Psoas muscle (tissue), 8 donors: ENCODE measurements at regions of chr12 and their contacts with region 1.

Region 1: GRCh38 chr12:27733052-27733656 is 22.5 kb downstream of the MRPS35 start:
- DNase-seq: no peak
- ATAC-seq: peak in 3 of 4 donors; percentile 61 to 67 (median 65)
- H3K4me3 ChIP-seq: no peak overlapping the region
- H3K27ac ChIP-seq: no peak overlapping the region
- H3K4me1 ChIP-seq: no peaks in the 10 kb centered on the region
- H3K27me3 ChIP-seq: no peaks in the 10 kb centered on the region
- CTCF ChIP-seq: peak; percentile 60

Region 2: GRCh38 chr12:27221625-27222387 is 511.3 kb before region 1 on chr12:
- intact Hi-C with region 1: no loop called
- DNase-seq: no peak
- ATAC-seq: no peak
- H3K4me3 ChIP-seq: no peak overlapping the region
- H3K27ac ChIP-seq: no peak overlapping the region
- H3K4me1 ChIP-seq: no peaks in the 10 kb centered on the region
- H3K27me3 ChIP-seq: no peaks in the 10 kb centered on the region
- CTCF ChIP-seq: no peak

Region 3: DNA sequence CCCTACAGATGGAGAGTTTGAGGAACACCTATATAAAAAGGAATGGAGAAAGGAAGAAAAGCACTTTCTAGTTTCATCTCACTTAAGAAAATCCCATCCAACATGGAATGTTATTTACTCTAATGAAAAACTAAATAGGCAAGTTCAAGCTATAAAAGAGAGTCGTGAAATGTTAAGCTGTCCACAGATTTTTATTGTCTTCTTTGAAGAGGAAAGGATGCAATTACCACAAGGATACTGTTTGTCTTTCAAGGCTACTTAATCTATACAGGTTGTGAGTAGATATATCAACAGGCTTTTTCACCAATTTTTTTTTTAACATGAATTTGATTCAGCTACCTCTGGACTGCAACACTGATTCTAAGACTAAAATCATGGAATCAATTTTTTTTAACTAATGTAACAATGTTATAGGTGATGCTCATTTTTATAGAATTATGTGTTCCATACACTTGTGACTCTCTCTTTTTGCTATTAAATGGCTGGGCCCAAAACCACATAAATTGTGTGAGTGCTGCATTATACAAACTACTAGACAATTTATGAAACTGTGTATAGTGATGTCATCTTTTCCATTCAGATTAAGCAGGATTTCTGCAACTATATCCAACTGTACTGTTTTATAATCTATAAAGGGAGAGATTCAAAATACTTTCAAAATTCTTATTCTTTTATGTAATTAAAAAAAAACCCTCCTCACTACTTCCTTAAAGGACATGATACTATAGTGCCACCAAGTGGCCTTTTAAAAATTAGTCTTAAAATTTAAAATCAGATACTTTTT is 427.3 kb before region 1 on chr12:
- intact Hi-C with region 1: no loop called
- DNase-seq: no peak
- ATAC-seq: no peak
- H3K4me3 ChIP-seq: no peak overlapping the region
- H3K27ac ChIP-seq: no peak overlapping the region
- H3K4me1 ChIP-seq: no peaks in the 10 kb centered on the region
- H3K27me3 ChIP-seq: no peaks in the 10 kb centered on the region
- CTCF ChIP-seq: peak; percentile 67

Region 4: GRCh38 chr12:27940756-27941402 is 207.7 kb after region 1 on chr12:
- intact Hi-C with region 1: loop called in 1 of 2 experiments (anchors 2 kb)
- DNase-seq: peak; percentile 56 to 73
- ATAC-seq: peak in 3 of 4 donors; percentile 51 to 58 (median 55)
- H3K4me3 ChIP-seq: no peak overlapping the region
- H3K27ac ChIP-seq: no peak overlapping the region
- H3K4me1 ChIP-seq: no peaks in the 10 kb centered on the region
- H3K27me3 ChIP-seq: no peaks in the 10 kb centered on the region
- CTCF ChIP-seq: peak; percentile 56